Ascending aorta (tissue), 2 donors: ENCODE measurements at regions of chr10 and their contacts with region 1.

Region 1: DNA sequence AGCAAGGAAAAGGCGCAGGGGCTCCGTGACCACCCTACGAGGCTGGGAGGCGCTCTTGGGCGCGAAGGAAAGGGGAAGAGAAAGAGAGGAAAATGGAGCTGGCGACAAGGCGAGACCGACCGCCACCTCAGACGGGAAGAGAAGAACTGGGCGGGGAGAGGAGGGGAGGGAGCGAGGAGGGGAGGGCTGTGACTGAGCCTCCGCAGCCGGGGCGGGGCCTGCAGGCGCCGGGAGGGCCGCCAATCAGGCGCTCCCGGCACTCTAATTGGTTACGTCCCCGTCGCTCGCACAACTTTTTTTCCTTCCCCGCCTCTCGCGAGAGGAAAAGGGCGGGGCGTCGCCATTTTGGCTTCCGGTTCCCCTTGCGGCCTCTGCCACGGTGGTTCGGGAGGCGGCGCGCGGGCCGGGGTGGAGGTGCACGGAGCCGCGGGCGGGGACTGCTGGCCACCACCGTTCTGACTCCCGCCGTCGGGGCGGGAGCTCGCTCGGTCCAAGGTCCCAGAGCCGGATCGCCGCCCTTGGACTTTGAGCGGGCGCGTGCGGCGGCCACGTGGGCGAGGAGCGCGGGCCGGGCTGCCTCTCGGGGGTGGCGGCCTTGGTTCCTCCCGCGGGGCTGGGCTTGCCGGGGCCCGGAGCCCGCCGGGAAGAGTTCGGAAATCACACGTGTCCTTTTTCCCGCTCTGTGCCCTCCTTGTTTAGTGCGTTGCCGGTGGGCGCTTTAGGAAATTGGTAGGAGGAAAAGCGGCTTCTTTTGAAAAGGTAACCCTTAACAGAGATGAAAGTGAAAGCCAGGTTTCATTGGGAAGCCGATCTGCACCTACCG is at the start of gene GDI2:
- DNase-seq: peak; percentile 80 to 98
- H3K4me3 ChIP-seq: peak within 1 kb of the TSS; percentile 87 to 90
- H3K27ac ChIP-seq: peak within 1 kb of the TSS; percentile 95 to 98
- H3K4me1 ChIP-seq: peaks cover 0 to 31% of the 10 kb centered on the region in 2 donors
- H3K27me3 ChIP-seq: no peaks in the 10 kb centered on the region
- CTCF ChIP-seq: peak in 1 of 3 experiments; percentile 9
- total RNA-seq, gene GDI2: 173 TPM

Region 2: DNA sequence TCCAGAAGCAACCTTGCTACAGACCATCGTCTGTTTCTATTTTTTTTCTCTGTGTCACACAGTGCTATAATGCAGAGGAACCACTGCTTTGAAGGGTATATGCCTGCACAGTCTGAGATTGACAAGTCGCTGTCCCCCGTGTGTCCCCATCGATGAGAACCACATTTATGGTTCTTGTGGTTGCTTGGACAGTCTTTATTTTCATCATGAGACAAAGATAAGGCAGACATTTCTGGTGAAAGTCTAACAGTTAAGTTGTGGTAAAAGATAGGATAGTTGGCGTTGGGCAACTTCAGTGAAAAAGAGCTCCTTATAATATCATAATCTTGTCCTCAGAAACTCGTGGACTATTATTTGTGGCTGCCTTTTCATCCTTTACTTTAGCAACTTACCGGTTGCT is 993.8 kb before region 1 on chr10:
- intact Hi-C with region 1: loop called (anchors 5 kb)
- DNase-seq: no peak
- H3K4me3 ChIP-seq: no peak overlapping the region
- H3K27ac ChIP-seq: no peak overlapping the region
- H3K4me1 ChIP-seq: no peaks in the 10 kb centered on the region
- H3K27me3 ChIP-seq: no peaks in the 10 kb centered on the region
- CTCF ChIP-seq: no peak

Region 3: DNA sequence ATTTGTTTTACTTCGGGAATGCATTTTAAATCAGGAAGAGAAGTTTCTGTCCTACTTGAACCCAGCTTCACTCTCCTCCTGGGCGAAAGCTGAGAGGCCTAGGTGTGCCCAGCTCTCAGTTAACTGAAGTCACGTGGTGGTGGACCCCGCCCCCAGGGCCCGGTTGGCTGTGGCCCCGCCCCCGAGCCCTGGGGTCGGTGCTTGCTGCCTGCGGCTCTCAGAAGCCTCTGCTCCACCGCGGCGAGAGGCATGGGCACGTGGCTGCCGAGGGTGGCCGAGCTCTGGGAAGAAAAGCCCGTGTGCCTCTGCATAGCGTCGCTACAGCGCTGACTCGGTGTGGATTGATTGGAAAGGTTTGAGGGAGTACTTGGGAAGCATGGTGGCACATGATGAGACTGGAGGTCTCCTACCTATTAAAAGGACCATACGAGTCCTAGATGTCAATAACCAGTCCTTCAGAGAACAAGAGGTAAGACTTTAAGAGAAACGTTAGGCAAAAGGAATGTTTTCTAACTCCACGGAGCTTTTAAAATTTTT is 367.0 kb before region 1 on chr10:
- intact Hi-C with region 1: loop called (anchors 10 kb)
- DNase-seq: peak; percentile 84 to 96
- H3K4me3 ChIP-seq: peak overlapping the region; percentile 74
- H3K27ac ChIP-seq: peak overlapping the region; percentile 71 to 78
- H3K4me1 ChIP-seq: peaks cover 0 to 14% of the 10 kb centered on the region in 2 donors
- H3K27me3 ChIP-seq: no peaks in the 10 kb centered on the region
- CTCF ChIP-seq: no peak

Region 4: DNA sequence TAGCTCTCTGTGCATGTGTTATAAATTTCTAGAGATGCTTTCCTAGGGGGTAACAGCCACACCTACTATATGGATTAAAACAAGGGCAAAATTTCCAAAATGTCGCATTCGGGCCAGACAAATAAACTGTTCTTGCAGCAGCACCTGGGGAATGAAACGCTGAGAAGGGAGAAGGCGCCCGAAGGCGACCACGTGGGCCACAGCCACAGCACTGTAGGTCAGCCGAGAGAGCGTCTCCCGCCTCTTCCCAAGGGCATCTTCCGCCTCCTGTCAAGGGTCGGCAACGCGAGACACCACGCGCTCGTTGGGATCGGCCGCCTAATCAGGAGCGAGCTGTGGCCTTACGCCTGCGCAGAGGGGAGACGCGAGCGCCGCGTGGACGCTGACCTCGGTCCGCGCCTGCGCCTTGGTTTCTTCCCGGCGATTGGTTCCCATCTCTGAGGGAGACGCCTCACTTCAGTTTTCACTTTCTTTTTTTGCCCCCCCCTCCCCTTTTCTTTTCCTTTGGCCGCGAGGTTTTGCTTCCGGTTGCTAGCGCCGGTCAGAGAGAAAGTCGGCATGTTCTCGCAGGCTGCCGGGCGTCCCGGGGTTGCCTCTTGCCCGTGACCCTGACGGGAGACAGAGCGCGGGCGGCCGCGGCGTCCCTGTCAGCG is 129.1 kb before region 1 on chr10 and contains the start of gene TASOR2:
- intact Hi-C with region 1: loop called (anchors 1 kb)
- DNase-seq: peak; percentile 85 to 98
- H3K4me3 ChIP-seq: peak within 1 kb of the TSS; percentile 85 to 90
- H3K27ac ChIP-seq: peak within 1 kb of the TSS; percentile 85 to 87
- H3K4me1 ChIP-seq: peaks cover 0 to 13% of the 10 kb centered on the region in 2 donors
- H3K27me3 ChIP-seq: no peaks in the 10 kb centered on the region
- CTCF ChIP-seq: no peak
- total RNA-seq, gene TASOR2: 12.2 TPM

Region 5: GRCh38 chr10:5873515-5873995 is 60.1 kb after region 1 on chr10:
- intact Hi-C with region 1: loop called (anchors 1 kb)
- DNase-seq: peak in 1 of 2 donors; percentile 76
- H3K4me3 ChIP-seq: no peak overlapping the region
- H3K27ac ChIP-seq: no peak overlapping the region
- H3K4me1 ChIP-seq: no peaks in the 10 kb centered on the region
- H3K27me3 ChIP-seq: no peaks in the 10 kb centered on the region
- CTCF ChIP-seq: peak; percentile 39 to 64 (median 55)

Region 6: DNA sequence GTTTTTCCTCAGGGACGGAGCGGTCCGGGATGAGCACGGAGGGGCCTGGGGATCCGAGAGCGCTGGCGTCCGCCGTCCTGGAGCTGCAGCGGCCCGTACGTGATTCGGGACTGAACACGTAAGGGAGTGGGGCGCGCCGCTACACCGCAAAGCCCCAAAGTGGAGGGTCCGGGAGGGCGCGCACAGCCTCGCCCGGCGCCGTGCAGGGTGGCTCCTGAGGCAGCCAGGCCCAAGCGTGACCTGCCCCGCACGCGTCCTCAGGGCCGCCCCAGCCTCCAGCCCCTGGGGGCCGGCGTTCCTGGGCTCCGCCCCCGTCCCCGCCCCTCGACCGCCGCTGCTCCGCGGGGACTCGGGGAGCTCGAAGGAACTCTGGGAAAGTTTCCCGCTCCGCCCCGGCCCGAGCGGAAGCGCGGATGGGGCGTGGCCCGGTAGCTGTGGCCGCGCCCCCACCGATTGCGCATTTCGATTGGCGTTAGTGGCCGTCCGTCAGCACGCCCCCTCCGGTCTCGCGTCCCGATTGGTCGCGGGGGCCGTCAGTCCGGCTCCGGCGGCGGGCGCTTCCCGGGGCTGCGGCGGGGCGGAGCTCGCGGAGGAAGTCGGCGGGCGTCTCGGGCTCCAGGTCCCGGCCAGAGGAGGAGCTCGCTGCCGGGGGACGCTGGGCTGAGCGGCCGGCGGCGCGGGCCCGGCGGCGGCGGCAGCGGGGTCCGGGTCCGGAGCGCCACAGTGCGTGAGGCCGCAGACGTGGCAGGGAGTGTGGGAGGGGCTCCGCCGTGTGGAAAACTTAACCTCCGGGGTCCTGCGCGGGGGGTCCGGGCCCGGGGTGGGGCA is 76.3 kb after region 1 on chr10 and contains the starts of genes ANKRD16 and FBH1:
- intact Hi-C with region 1: loop called (anchors 1 kb)
- DNase-seq: peak; percentile 86 to 99
- H3K4me3 ChIP-seq: peak within 1 kb of the TSS; percentile 80 to 95
- H3K27ac ChIP-seq: peak within 1 kb of the TSS; percentile 84 to 85
- H3K4me1 ChIP-seq: peaks cover 2 to 25% of the 10 kb centered on the region in 2 donors
- H3K27me3 ChIP-seq: no peaks in the 10 kb centered on the region
- CTCF ChIP-seq: no peak
- total RNA-seq, gene ANKRD16: 10.4 TPM
- total RNA-seq, gene FBH1: 43.0 TPM

Region 7: GRCh38 chr10:6088721-6089390 is 275.4 kb after region 1 on chr10 and contains the start of gene RBM17:
- intact Hi-C with region 1: loop called (anchors 2 kb)
- DNase-seq: peak; percentile 86 to 99
- H3K4me3 ChIP-seq: peak within 1 kb of the TSS; percentile 71 to 96
- H3K27ac ChIP-seq: peak within 1 kb of the TSS; percentile 71 to 84
- H3K4me1 ChIP-seq: peaks cover 4 to 27% of the 10 kb centered on the region in 2 donors
- H3K27me3 ChIP-seq: no peaks in the 10 kb centered on the region
- CTCF ChIP-seq: peak; percentile 99 to 100 (median 100)
- total RNA-seq, gene RBM17: 22.7 TPM